ENCODE measurements at regions of chr14 and their contacts with region 1.

Region 1: DNA sequence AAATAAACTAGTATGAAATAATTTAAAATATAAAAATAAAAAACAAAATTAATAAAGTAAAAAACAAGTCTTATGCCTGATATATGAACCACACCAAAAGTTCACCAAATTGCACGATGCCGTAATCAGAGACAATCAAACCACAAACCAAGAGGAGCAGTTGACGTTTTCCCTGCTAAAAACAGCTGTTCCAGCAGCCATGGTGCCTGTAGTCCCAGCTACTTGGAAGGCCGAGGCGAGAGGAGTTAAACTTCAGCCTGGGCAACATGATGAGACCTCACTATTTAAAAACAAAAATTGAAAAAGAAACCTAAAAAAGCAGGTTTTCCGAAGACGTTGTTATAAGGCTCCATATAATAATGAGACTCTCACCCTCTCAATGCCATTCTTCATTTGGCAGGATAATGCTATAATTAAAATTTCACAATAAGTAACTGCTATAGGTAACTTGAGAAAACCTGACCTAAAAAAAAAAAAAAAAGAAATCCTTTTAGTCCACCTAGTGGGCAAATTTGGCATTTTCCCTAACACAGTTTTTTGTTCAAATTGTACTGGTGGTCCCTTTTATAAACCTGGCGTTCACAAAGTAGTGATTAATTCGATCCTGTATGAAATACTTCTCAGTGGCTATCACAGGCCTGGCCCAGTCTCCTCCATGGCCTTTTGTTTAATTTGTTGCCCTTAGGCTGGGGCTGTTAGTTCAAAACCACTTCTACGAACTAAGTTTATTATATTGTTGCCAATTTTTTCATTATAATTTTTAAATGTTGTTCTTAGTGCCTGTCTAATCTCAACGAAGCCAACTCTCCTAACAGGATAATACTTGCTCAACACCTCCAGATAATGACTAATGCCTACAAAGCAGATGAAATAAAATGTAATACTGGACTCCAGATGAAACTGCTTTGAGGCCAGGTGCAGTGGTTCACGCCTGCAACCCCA is 62.1 kb downstream of the TNFAIP2 start:
- DNase-seq: no peak
- H3K4me3 Mint-ChIP-seq: no peak overlapping the region
- H3K27ac Mint-ChIP-seq: no peak overlapping the region
- H3K4me1 Mint-ChIP-seq: peaks cover 8% of the 10 kb centered on the region
- H3K27me3 Mint-ChIP-seq: peaks cover 43% of the 10 kb centered on the region

Region 2: DNA sequence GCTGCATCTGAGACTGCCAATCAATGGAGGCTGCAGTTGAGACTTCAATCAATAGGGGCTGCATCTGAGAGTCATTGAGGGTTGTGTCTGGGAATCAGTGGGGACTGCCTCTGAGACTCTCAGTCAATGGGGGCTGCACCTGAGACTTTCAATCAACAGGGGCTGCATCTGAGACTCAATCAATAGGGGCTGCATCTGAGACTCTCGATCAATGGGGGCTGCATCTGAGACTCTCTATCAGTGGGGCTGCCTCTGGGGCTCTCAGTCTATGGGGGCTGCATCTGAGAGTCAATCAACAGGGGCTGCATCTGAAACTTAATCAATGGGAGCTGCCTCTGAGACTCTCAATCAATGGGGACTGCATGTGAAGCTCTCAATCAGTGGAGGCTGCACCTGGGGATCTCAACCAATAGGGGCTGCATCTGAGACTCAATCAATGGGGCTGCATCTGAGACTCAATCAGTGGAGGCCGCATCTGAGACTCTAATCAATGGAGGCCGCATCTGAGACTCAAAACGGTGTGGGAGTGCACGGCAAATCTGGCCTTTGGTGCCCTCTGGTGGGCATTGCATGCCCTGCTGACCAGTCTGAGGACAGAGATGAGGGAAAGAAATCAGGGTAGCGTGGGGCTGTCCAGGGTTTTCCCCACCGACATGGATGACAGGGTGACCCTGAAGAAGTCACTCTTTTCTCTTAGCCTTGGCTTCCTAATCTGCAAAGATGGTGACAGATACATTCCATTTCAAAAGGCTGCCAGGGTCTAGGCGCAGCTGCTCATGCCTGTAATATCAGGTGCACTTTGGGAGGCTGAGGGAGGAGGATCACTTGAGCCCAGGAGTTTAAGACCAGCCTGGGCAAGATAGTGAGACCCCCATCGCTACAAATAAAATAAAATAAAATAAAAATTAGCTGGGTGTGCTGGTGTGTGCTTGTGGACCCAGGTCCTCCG is 107.4 kb after region 1 on chr14:
- CTCF ChIA-PET with region 1: no interaction called
- intact Hi-C with region 1: loop called (anchors 2 kb)
- DNase-seq: peak; percentile 88
- H3K4me3 Mint-ChIP-seq: no peak overlapping the region
- H3K27ac Mint-ChIP-seq: no peak overlapping the region
- H3K4me1 Mint-ChIP-seq: no peaks in the 10 kb centered on the region
- H3K27me3 Mint-ChIP-seq: peaks cover 8% of the 10 kb centered on the region

Measured in activated naive CD4-positive, alpha-beta T cell treated with anti-CD3 and anti-CD28 coated beads for 36 hours (primary cell).